GM10248 (cell line): ENCODE measurements at regions of chr4 and their contacts with region 1.

Region 1: DNA sequence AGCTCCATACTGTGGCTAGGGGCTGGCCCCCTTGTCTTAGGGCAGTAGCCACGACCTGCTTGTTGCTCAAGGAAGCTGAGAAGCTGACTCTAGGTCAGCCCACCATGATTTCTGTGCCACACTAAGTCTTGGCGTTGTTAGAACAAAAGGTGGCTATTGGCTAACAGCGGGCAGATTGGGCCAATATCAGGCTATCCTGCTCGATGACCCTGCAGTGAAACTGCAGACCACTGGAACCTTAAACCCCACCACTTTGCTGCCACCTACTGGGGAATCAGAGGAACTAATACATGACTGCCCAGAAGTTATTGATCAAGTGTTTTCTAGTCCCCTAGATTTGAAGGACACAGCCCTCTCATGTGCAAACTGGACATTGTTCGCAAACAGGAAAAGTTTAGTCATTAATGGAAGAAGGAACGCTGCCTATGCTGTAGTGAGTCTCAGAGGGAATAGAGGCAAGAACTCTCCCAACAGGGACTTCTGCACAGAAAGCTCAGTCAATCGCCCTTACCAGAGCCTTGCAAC is 17.0 kb upstream of the PAPSS1 start:
- DNase-seq: peak; percentile 48
- CTCF ChIP-seq: peak; percentile 82

Region 2: GRCh38 chr4:107719922-107720722 is 16.9 kb before region 1 on chr4 and contains the start of gene PAPSS1:
- CTCF ChIA-PET with region 1: interaction called, 51 read pairs
- POLR2A ChIA-PET with region 1: no interaction called
- DNase-seq: peak; percentile 93
- CTCF ChIP-seq: no peak

Region 3: GRCh38 chr4:107725281-107725859 is 11.6 kb before region 1 on chr4:
- CTCF ChIA-PET with region 1: interaction called, 51 read pairs
- POLR2A ChIA-PET with region 1: no interaction called
- DNase-seq: no peak
- CTCF ChIP-seq: no peak

Region 4: GRCh38 chr4:107747748-107748486 is 10.9 kb after region 1 on chr4:
- CTCF ChIA-PET with region 1: interaction called, 22 read pairs
- POLR2A ChIA-PET with region 1: no interaction called
- DNase-seq: no peak
- CTCF ChIP-seq: no peak

Region 5: GRCh38 chr4:107757864-107758476 is 21.0 kb after region 1 on chr4:
- CTCF ChIA-PET with region 1: interaction called, 13 read pairs
- POLR2A ChIA-PET with region 1: no interaction called
- DNase-seq: peak; percentile 20
- CTCF ChIP-seq: peak; percentile 40

Region 6: DNA sequence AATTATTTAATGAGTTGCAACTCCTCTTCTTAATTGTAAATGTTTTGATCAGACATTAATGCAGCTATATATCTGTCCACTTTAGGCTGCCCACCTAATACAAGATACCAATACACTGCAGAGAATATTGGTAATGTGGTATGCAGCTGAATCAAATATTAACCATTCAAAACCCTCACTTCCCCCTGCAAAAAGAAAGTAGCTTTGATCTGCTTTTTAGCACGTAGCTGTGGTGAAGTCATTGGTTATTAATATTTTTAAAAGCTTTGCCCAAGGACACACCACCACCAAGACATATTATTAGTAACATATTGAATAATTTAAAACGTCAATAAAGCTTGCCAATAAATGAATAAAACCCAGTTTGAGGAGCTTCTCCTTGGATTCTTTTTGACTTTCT is 165.7 kb after region 1 on chr4:
- CTCF ChIA-PET with region 1: interaction called, 10 read pairs
- POLR2A ChIA-PET with region 1: no interaction called
- DNase-seq: peak; percentile 10
- CTCF ChIP-seq: no peak